ENCODE measurements at regions of chr12 and their contacts with region 1.

Region 1: DNA sequence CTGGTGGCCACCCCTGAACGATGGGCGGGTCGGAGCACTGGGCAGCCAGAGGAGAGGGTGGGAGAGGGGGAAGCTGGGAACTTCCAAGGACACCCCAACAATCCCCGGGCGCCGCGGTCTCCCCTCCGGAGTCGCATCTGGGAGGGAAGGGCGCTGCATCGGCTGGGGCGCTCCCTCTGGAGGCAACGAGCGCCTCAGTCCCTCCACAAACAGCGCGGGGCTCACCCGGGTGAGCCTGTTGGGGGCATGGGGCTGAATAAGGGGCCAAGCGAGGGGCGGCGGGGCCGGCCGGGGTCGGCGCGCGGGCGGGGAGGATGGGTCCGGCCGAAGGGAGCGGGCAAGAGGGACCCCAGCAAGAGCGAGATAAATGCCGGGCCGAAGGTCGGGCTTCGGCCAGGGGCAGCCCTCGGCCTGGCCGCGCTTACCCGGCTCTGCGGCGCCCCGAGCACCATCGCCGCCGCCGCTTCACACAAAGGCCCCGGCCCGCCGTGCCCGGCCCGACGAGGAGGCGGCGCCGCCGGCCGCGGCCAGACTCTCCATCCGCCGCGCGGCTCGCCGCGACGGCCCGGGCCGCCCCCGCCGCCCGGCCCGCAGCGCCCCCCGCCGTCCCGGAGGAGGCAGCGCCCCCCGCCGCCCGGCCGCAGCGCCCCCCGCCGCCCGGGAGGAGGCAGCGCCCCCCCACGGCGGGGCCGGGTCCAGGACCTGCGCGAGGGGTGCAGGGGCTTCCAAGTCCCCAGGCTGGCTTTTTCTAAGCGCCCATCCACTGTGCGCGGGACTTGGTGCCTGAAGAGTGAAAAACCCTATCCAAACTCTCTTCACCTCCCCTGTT is at the start of gene ZBTB39:
- DNase-seq: peak; percentile 43

Region 2: GRCh38 chr12:56766535-56766934 is 239.7 kb before region 1 on chr12:
- in situ Hi-C with region 1: loop called (anchors 10 kb)
- DNase-seq: peak; percentile 54

Region 3: GRCh38 chr12:57268264-57268663 is 262.1 kb after region 1 on chr12:
- in situ Hi-C with region 1: no loop called
- DNase-seq: no peak

Measured in KBM-7 (cell line).